ENCODE measurements at regions of chr14 and their contacts with region 1.

Region 1: DNA sequence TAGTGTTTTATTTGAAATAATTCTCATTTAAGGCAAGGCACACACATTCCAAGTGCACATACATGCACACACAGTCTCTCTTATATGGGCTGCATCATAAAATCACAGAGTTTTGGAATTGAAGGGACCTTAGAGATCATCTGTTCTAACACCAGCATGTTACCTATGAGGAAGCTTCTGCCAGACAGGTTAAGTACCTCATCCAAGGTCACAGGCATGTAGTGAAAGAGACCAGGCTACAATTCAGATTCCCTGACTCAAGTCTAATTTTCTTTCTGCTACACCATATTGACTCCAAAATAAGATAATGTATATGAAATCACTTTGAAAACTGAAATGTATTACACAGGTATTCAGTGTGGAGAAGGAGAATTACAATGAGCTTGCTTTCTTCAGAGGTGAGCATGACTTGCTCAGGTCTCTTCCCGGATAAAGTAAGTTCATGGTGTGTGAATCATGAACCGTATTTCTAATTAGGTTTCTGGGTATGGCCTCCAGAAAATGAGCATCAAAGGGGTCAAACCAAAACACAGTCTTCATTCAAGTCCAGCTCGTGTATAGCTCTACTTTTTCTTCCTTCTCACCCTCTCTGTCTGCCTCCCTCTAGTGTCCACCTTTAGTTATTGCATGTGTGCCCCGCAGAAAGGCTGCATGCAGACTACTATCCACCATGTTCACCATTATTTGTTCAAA is 411.9 kb downstream of the FUT8 start:
- DNase-seq: peak; percentile 19 to 58 (median 37)
- H3K4me3 ChIP-seq: no peak overlapping the region
- H3K27ac ChIP-seq: no peak overlapping the region
- H3K4me1 ChIP-seq: no peaks in the 10 kb centered on the region
- H3K27me3 ChIP-seq: no peaks in the 10 kb centered on the region
- CTCF ChIP-seq: peak; percentile 50 to 72 (median 51)
- EP300 ChIP-seq: no peak
- POLR2A ChIP-seq: no peak

Region 2: GRCh38 chr14:65164068-65164824 is 660.2 kb before region 1 on chr14:
- intact Hi-C with region 1: loop called (anchors 5 to 10 kb)
- DNase-seq: no peak
- H3K4me3 ChIP-seq: no peak overlapping the region
- H3K27ac ChIP-seq: no peak overlapping the region
- H3K4me1 ChIP-seq: no peaks in the 10 kb centered on the region
- H3K27me3 ChIP-seq: no peaks in the 10 kb centered on the region
- CTCF ChIP-seq: peak; percentile 21 to 51 (median 44)
- EP300 ChIP-seq: no peak
- POLR2A ChIP-seq: no peak

Region 3: DNA sequence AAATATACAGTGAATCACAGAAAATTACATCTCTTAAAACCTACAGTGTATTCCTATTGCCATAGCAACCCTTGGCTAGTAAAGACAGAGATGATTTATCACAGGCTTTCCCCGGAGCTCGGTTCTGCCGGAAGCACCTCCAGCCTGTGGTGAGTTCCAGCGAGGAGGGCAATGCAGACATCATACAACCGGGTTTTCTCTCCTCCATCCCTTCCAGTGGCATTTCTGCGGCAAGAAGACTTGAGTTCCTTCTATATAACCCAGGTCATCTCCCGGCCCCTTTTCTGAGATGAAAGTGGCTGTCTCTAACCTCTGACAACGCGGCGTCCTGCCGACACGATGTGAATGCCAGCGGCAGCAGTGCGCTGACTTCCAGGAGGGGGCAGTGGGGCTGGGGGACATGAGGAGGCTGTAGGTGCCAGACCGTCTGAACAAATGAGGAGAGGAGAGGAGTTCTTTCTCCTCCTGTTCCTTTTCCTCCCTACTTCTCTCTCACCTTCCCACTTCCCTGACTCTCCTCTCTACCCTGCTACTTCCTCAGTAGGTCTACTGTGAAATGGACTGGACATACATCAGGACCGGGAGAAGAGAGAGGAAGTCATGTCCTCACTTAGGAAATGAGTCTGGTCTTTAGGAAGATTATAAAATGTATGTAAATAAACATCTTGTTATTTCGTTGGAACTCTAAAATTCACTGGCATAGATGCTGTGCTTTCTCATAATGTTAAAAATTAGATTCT is 653.5 kb before region 1 on chr14:
- intact Hi-C with region 1: loop called (anchors 5 to 10 kb)
- DNase-seq: peak in 3 of 5 donors; percentile 13 to 47 (median 29)
- H3K4me3 ChIP-seq: no peak overlapping the region
- H3K27ac ChIP-seq: no peak overlapping the region
- H3K4me1 ChIP-seq: peaks cover 5% of the 10 kb centered on the region
- H3K27me3 ChIP-seq: no peaks in the 10 kb centered on the region
- CTCF ChIP-seq: no peak
- EP300 ChIP-seq: no peak
- POLR2A ChIP-seq: no peak

Region 4: DNA sequence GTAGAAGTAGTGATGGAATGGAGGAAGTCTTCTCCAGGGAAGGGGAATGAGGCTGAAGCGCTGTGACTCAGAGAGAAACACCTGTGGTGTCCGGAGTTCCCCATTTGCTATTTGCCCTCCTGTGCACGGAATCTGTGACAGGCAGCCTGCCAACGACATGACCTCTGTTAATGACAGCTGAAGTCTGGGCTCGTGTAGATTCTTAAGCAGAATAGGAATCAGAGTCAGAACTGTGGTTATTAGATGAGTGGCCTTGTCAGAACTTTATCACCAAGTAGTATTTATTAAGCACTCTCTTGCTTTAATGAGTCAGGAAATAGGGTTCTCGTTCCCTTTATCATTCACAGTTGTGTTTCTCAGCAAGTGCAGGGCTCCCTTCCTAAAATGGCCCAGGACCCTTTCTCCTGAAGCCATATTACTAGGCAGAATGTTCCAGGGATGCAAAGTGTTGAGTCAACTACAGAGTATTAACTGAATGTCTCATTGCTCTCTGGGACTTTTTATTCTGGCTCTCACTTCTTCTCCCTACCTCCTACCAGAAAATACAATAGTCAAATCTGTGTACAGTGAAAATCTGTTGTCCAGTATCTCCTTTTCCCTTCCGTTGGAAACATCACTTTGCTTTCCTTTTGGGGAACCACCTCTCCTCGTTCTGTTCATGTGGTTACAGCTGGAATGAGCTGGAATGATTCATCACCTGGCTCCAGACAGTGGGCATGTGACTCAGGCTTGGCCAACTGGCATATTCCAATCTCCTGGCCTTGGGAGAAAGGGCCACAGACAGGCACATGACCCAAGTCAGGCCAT is 644.3 kb before region 1 on chr14:
- intact Hi-C with region 1: loop called in 1 of 4 experiments (anchors 5 kb)
- DNase-seq: peak; percentile 27 to 59 (median 42)
- H3K4me3 ChIP-seq: no peak overlapping the region
- H3K27ac ChIP-seq: no peak overlapping the region
- H3K4me1 ChIP-seq: peaks cover 1% of the 10 kb centered on the region
- H3K27me3 ChIP-seq: no peaks in the 10 kb centered on the region
- CTCF ChIP-seq: no peak
- EP300 ChIP-seq: no peak
- POLR2A ChIP-seq: no peak

Region 5: DNA sequence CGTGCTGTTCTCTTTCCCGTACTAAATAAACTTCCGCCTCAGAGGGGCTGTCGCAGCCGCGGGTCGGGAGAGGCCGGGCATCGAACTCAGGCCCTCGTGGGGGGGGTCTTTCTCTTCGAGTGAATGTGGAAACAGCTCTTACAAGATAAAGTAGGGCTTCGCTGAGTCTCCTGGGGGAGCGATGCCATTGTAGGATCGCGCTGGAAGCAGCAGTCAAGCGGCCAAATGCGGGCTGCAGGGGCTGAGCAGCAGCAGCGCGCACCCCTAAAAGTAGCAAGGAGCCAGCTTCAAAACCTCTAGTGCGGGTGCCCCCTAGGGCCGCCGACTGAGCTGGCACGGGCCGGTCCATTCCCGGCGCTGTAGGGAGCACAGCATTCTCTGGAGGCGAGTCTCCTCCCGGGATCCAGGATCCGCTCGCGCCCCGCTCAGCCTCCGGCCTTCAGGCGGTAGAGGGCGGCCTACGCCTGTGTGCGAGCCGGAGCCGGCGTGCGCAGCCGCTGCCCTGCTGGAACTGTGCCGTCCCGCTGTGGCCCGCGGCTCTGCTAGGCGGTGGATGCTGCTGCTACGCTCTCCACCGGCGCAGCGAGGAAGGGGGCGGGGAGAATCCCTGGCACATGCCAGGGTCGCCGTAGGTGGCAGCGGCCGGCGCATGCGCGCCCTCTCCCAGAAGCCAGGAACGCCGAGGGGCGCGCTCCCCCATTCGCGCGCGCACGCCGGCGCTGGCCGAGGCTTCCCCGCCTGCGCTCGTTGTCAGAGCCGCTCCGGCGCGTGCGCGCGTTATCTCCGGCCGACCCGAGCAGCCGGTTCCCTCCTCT is 412.2 kb before region 1 on chr14 and contains the start of gene FUT8:
- intact Hi-C with region 1: loop called (anchors 5 to 10 kb)
- DNase-seq: peak; percentile 92 to 98 (median 96)
- H3K4me3 ChIP-seq: peak within 1 kb of the TSS; percentile 61
- H3K27ac ChIP-seq: peak within 1 kb of the TSS; percentile 79 to 85
- H3K4me1 ChIP-seq: peaks cover 1% of the 10 kb centered on the region
- H3K27me3 ChIP-seq: no peaks in the 10 kb centered on the region
- CTCF ChIP-seq: peak; percentile 30 to 50 (median 47)
- EP300 ChIP-seq: no peak
- POLR2A ChIP-seq: peak; percentile 31
- total RNA-seq, gene FUT8: 20.4 to 51.1 (median 34.0) TPM

Region 6: GRCh38 chr14:65550779-65551643 is 273.4 kb before region 1 on chr14:
- intact Hi-C with region 1: no loop called
- DNase-seq: no peak
- H3K4me3 ChIP-seq: no peak overlapping the region
- H3K27ac ChIP-seq: no peak overlapping the region
- H3K4me1 ChIP-seq: peaks cover 2% of the 10 kb centered on the region
- H3K27me3 ChIP-seq: no peaks in the 10 kb centered on the region
- CTCF ChIP-seq: no peak
- EP300 ChIP-seq: no peak
- POLR2A ChIP-seq: no peak

Region 7: DNA sequence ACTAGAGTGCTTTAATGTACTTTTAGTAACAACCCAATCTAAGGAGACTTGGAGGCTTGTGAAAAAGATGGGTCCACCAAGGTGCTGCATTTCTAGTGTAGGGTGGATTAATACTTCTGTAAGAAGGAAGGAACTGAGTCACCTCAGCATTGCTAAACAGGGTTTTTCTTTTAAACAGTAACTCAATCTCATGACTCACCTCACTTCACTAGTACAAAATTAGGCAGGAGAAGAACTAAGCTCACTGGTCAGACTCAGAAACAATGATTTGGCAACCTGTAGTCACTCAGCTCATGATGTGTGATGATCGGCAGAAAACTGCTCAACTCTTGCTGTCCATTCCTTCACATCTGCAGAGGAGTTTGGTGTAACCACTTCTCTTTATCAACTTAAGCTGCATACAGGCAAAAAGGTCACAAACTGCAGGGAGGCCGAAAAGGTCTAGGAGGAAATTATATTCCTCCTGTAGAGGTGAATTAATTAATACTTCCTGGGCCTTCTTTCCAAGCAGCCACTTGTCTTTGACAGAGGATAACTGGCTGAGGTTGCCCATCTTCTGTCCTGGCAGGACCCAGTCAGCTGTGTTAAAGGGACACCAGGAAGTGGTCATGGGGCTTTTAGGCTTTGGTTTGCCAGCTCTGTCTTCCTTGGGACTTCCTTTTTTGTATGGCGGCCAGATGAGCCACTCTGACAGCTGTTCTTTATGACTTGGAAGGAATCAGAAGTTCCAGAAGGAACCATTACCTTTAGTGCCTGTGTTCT is 55.0 kb after region 1 on chr14:
- intact Hi-C with region 1: no loop called
- DNase-seq: no peak
- H3K4me3 ChIP-seq: no peak overlapping the region
- H3K27ac ChIP-seq: no peak overlapping the region
- H3K4me1 ChIP-seq: no peaks in the 10 kb centered on the region
- H3K27me3 ChIP-seq: no peaks in the 10 kb centered on the region
- CTCF ChIP-seq: no peak
- EP300 ChIP-seq: no peak
- POLR2A ChIP-seq: no peak

Measured in ovary (tissue), 10 donors.